Activated CD4-positive, alpha-beta memory T cell treated with anti-CD3 and anti-CD28 coated beads for 36 hours (primary cell): ENCODE measurements at regions of chr4 and their contacts with region 1.

Region 1: GRCh38 chr4:140153718-140154571 is at the start of gene MAML3:
- DNase-seq: peak; percentile 88
- H3K4me3 Mint-ChIP-seq: peak within 1 kb of the TSS; percentile 78
- H3K27ac Mint-ChIP-seq: no peak within 1 kb of the TSS
- H3K4me1 Mint-ChIP-seq: peaks cover 45% of the 10 kb centered on the region
- H3K27me3 Mint-ChIP-seq: peaks cover 20% of the 10 kb centered on the region
- total RNA-seq, gene MAML3: 0.51 to 0.76 TPM

Region 2: GRCh38 chr4:139083956-139084803 is 1069.8 kb before region 1 on chr4:
- CTCF ChIA-PET with region 1: no interaction called
- POLR2A ChIA-PET with region 1: no interaction called
- intact Hi-C with region 1: loop called (anchors 5 kb)
- DNase-seq: peak; percentile 90
- H3K4me3 Mint-ChIP-seq: peak overlapping the region; percentile 98
- H3K27ac Mint-ChIP-seq: peak overlapping the region; percentile 99
- H3K4me1 Mint-ChIP-seq: peaks cover 36% of the 10 kb centered on the region
- H3K27me3 Mint-ChIP-seq: no peaks in the 10 kb centered on the region

Region 3: DNA sequence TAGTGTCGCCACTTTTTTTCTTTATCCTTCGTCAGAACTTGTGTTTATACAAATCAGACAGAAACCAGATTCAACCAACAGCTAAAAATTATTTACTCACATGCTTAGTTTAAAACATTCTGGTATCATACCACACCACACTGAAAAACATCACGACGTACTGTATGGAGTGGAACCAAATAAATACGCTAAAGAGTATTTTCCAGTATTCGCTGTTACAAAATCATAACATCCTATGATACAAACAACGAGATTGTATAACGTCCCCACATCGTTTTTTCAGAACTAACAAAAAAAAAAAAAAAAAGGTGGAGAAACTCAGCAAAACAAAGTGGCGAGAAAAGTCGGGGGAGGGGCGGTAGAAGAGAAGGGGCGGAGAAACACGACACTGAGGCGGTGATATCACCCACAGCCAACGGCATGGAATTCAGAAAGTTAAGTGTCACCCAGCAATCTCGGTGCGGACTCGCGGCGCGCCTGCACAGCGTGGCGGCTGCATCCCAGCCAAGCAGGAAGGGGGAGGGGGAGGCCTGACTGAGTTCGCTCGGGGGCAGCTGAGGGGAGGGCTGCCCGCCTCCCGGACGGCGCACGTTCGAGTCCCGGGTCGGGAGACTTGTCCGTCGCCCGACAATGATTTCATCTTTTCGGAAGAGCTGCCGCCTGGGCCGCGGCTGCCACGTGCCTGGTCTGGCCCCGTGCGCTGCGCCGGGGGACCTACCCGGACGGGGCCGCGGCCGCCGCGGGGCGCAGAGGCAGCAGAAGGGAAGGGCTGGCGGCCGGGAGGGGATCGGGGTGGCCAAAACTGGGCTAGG is 598.8 kb before region 1 on chr4:
- CTCF ChIA-PET with region 1: no interaction called
- POLR2A ChIA-PET with region 1: no interaction called
- intact Hi-C with region 1: loop called (anchors 5 kb)
- DNase-seq: peak; percentile 91
- H3K4me3 Mint-ChIP-seq: peak overlapping the region; percentile 95
- H3K27ac Mint-ChIP-seq: peak overlapping the region; percentile 96
- H3K4me1 Mint-ChIP-seq: peaks cover 62% of the 10 kb centered on the region
- H3K27me3 Mint-ChIP-seq: no peaks in the 10 kb centered on the region

Region 4: DNA sequence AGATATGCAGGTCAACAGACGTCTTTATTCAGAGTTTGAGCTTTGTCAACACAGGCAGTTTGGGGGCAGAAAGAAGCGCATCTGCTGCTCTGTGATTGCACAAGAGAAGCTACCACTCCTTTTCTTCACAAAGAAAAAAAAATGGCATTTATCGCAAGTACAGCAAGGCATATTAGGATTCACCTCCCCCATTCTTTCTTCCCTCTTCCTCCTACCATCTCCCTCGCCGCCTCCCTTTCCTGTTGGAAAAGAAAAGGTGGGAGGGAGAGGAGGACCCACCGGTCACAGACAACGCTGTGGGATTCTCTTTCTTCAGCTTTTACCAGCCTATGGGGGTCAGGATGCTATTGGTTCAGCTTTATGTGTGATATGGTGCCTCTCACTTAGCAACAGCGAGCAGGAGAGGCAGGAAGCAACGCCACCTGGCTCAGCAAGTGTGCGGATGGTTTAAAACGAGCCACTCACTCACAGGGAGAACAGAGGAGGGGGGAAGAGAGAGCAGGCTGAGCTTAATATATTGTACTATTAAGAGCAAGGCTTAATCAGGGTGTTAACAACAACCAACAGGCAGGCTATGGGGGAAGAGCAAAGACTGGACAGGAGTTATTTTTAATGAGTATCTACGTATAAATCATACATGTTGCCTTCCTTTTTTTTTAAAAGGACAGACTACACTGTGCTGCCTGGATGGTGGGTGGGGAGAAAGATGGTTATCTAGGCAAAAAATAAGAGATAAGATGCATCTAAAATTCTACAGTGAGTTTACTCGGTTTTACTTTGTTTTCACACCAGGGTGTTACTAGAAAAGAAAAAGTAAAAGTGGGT is 104.7 kb before region 1 on chr4:
- CTCF ChIA-PET with region 1: interaction called, 3 read pairs
- POLR2A ChIA-PET with region 1: no interaction called
- intact Hi-C with region 1: loop called (anchors 2 kb)
- DNase-seq: peak; percentile 62
- H3K4me3 Mint-ChIP-seq: peak overlapping the region; percentile 57
- H3K27ac Mint-ChIP-seq: no peak overlapping the region
- H3K4me1 Mint-ChIP-seq: peaks cover 24% of the 10 kb centered on the region
- H3K27me3 Mint-ChIP-seq: peaks cover 32% of the 10 kb centered on the region

Region 5: DNA sequence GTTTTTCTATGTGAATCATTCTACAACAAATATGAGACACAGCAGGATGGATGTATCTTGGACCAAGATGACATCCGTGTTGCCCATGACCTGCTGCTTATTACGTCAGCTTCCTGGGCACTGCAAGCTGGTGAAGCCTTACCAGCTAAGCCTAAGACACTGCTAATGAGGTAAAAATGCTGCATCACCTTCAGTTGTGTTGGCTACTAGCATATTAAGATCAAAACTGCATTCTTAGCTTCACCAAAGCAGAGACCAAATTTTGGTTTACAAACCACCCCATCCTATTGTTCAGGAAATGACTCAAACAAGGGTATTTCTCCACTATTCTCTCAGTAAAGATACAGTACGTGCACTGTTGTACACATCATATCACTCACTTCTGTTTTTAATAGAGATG is 50.3 kb before region 1 on chr4:
- CTCF ChIA-PET with region 1: interaction called, 4 read pairs
- POLR2A ChIA-PET with region 1: interaction called, 3 read pairs
- intact Hi-C with region 1: loop called (anchors 1 kb)
- DNase-seq: peak; percentile 81
- H3K4me3 Mint-ChIP-seq: no peak overlapping the region
- H3K27ac Mint-ChIP-seq: peak overlapping the region; percentile 73
- H3K4me1 Mint-ChIP-seq: peaks cover 49% of the 10 kb centered on the region
- H3K27me3 Mint-ChIP-seq: no peaks in the 10 kb centered on the region

Region 6: GRCh38 chr4:140373328-140374129 is 219.6 kb after region 1 on chr4 and contains the start of gene SCOC:
- CTCF ChIA-PET with region 1: no interaction called
- POLR2A ChIA-PET with region 1: no interaction called
- intact Hi-C with region 1: loop called (anchors 5 kb)
- DNase-seq: peak; percentile 99
- H3K4me3 Mint-ChIP-seq: no peak within 1 kb of the TSS
- H3K27ac Mint-ChIP-seq: no peak within 1 kb of the TSS
- H3K4me1 Mint-ChIP-seq: peaks cover 32% of the 10 kb centered on the region
- H3K27me3 Mint-ChIP-seq: no peaks in the 10 kb centered on the region
- total RNA-seq, gene SCOC: 46.9 to 48.4 TPM